ENCODE measurements at regions of chr6 and their contacts with region 1.

Region 1: DNA sequence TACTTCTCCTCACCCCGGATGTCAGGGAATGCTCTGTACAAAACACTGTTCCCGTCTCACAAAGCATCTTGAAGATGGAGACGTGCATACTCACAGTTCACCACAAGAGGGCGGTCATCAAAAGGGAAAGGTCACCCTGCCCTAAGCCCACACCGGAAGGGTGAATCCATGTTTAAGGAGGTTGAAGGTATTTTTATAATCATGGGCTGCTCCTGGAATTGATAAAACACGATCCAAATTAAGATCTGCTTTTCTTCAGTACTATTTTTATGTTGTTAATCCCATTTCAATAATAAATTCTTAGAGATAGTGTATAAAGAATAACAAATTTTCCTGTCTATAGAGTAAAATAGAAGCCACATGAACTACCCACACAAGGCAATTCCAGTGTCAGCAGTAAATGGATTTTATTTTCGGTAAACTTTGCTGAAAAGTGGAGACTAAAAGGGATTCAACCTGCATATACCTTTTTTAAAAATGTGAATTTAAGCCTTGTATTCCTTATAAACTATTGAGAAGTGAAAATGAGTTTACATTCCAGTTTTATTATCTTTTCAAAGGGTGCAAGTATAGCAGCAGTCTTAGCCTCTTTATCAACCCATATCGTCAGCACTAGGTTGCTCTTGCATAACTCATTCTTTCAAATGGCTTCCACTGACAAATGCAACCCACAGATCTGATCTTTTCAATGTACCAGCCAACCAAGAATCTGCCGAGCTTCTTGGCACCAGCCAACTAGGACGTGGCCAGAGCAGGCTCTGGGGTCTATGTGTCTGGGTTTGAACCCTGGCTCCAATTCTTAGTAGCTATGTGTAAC is 79.7 kb upstream of the MBOAT1 start:
- DNase-seq: peak; percentile 53 to 71
- H3K4me3 ChIP-seq: no peak overlapping the region
- H3K27ac ChIP-seq: no peak overlapping the region
- H3K4me1 ChIP-seq: no peaks in the 10 kb centered on the region
- H3K27me3 ChIP-seq: no peaks in the 10 kb centered on the region
- CTCF ChIP-seq: peak; percentile 95

Region 2: GRCh38 chr6:19759117-19759880 is 532.7 kb before region 1 on chr6:
- CTCF ChIA-PET with region 1: no interaction called
- POLR2A ChIA-PET with region 1: no interaction called
- intact Hi-C with region 1: no loop called
- DNase-seq: peak; percentile 14 to 46
- H3K4me3 ChIP-seq: no peak overlapping the region
- H3K27ac ChIP-seq: no peak overlapping the region
- H3K4me1 ChIP-seq: peaks cover 11% of the 10 kb centered on the region; the same call in 1 of the 2 replicates
- H3K27me3 ChIP-seq: no peaks in the 10 kb centered on the region
- CTCF ChIP-seq: no peak

Region 3: DNA sequence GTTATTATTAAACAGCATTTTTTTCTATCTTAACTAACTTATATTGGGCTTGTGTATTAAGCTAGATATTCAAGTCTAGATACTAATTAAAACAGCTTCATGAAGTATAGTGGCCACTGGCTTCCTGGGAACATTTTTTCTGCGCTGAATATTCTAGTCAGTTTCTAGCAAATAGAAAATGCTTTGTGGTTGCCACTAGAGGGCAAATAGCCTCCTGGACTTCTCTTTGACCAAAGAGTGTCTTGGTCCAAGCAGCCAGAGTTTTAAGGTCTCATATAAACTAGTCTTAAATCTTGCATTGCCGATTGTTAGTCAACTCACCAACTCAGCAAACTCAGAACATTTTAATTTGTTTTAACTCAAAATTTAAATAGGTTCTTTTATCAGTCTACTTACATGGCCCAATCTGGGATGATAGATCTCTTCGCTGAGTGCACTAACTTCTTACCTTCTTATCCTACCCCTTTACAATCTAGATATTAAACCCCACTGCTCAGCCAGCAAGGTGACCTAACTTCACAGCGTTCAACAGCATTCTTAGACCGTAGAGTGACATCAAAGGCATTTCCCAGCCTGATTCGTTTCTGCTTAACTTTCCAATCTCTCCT is 479.4 kb before region 1 on chr6:
- CTCF ChIA-PET with region 1: no interaction called
- POLR2A ChIA-PET with region 1: no interaction called
- intact Hi-C with region 1: no loop called
- DNase-seq: no peak
- H3K4me3 ChIP-seq: no peak overlapping the region
- H3K27ac ChIP-seq: no peak overlapping the region
- H3K4me1 ChIP-seq: no peaks in the 10 kb centered on the region
- H3K27me3 ChIP-seq: no peaks in the 10 kb centered on the region
- CTCF ChIP-seq: peak; percentile 73

Region 4: DNA sequence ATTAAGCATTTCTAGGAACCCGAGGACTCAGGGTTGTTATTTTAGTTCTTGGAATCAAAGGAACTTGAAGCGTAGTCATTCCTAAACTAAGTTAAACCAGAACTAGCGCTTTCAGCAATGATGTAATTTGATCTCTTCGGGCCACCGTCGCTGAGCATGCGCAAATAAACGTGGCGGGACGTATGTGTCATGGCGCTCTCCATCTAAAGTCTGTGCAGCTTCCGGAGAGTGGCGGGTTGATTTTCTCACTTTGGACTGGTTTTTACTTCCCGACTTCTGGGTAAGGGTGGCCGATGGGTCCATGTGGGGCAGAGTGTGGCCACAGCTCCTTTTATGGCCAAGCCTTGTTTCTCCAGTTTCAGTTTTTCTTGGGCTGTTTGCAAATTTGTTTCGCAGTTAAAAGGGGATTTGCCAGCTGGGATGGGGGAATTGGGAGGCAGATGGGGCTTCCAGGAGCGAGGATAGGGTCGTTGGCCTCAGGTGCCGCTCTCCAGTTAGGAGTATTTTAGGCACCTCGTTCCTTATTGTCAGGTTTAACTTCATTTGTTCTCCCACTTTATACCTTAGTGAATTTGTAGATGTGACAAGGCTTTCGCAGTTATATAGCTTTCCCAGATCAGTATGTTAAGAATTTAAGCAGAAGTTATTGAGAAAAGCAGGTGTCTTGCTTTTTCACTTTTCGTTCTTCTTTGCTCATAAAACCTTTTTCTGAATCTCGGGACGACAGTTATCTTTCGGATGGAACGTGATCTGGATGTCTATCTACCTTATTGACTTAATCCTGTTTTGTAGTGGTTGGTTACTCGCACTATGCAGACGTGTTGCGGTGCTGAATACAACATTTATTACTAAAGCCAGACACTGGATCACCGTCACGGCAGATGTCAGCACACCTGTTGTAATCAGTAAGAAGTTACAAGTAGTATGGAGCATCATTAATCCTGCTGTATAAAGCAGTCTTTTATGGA is 242.6 kb after region 1 on chr6 and contains the start of gene CDKAL1:
- CTCF ChIA-PET with region 1: interaction called, 4 read pairs
- POLR2A ChIA-PET with region 1: no interaction called
- intact Hi-C with region 1: loop called (anchors 1 kb)
- DNase-seq: peak; percentile 79 to 81
- H3K4me3 ChIP-seq: peak within 1 kb of the TSS; percentile 77
- H3K27ac ChIP-seq: peak within 1 kb of the TSS; percentile 58
- H3K4me1 ChIP-seq: peaks cover 13% of the 10 kb centered on the region
- H3K27me3 ChIP-seq: no peaks in the 10 kb centered on the region
- CTCF ChIP-seq: no peak
- total RNA-seq, gene CDKAL1: 11.5 and 16.1 TPM in 2 replicates